Caco-2 (cell line): ENCODE measurements at regions of chr12 and their contacts with region 1.

Region 1: GRCh38 chr12:121050725-121051124 is 11.7 kb upstream of the OASL start:
- DNase-seq: peak in 1 of 2 experiments; percentile 13
- H3K4me3 ChIP-seq: no peak overlapping the region
- H3K4me3 Mint-ChIP-seq: no peak overlapping the region
- H3K27ac Mint-ChIP-seq: no peak overlapping the region
- H3K4me1 ChIP-seq: no peaks in the 10 kb centered on the region
- H3K4me1 Mint-ChIP-seq: no peaks in the 10 kb centered on the region
- H3K27me3 ChIP-seq: no peaks in the 10 kb centered on the region
- H3K27me3 Mint-ChIP-seq: no peaks in the 10 kb centered on the region
- CTCF ChIP-seq: no peak

Region 2: DNA sequence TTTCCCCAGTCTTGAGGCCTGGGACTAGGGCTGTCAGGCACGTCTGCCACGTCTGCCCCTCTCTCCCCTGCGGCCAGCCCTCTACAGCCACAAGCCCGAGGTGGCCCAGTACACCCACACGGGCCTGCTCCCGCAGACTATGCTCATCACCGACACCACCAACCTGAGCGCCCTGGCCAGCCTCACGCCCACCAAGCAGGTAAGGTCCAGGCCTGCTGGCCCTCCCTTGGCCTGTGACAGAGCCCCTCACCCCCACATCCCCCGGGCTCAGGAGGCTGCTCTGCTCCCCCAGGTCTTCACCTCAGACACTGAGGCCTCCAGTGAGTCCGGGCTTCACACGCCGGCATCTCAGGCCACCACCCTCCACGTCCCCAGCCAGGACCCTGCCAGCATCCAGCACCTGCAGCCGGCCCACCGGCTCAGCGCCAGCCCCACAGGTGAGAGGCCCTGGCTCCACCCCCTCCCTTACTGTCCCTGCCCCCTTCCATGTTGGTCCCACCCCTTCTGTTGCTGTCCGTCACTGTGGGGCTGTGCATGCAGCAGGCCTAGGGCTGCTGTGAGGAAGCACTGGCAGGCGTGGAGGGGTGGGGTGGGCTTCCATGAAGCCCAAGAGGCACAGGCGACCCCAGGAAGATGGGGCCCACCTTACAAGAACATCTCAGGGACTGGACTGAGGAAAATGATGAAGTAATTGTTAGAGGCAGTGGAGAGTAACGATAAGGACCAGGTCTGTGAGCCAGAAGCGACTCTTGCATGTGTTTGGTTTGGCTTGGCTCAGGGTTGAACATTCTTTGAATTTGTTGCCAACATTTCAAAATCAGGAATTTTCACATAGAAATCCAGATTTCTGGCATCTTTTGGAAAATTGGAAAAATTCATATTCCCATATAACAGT is 51.3 kb before region 1 on chr12:
- CTCF ChIA-PET with region 1: no interaction called
- POLR2A ChIA-PET with region 1: no interaction called
- intact Hi-C with region 1: no loop called
- DNase-seq: no peak
- H3K4me3 ChIP-seq: no peak overlapping the region
- H3K4me3 Mint-ChIP-seq: no peak overlapping the region
- H3K27ac Mint-ChIP-seq: no peak overlapping the region
- H3K4me1 ChIP-seq: no peaks in the 10 kb centered on the region
- H3K4me1 Mint-ChIP-seq: no peaks in the 10 kb centered on the region
- H3K27me3 ChIP-seq: no peaks in the 10 kb centered on the region
- H3K27me3 Mint-ChIP-seq: no peaks in the 10 kb centered on the region
- CTCF ChIP-seq: no peak

Region 3: GRCh38 chr12:121190523-121191031 is 139.9 kb after region 1 on chr12:
- CTCF ChIA-PET with region 1: no interaction called
- POLR2A ChIA-PET with region 1: interaction called, 10 read pairs
- intact Hi-C with region 1: no loop called
- DNase-seq: peak in 1 of 2 experiments; percentile 22
- H3K4me3 ChIP-seq: no peak overlapping the region
- H3K4me3 Mint-ChIP-seq: no peak overlapping the region
- H3K27ac Mint-ChIP-seq: no peak overlapping the region
- H3K4me1 ChIP-seq: no peaks in the 10 kb centered on the region; the same call in 1 of the 2 replicates
- H3K4me1 Mint-ChIP-seq: no peaks in the 10 kb centered on the region
- H3K27me3 ChIP-seq: no peaks in the 10 kb centered on the region
- H3K27me3 Mint-ChIP-seq: no peaks in the 10 kb centered on the region
- CTCF ChIP-seq: no peak